Activated CD8-positive, alpha-beta memory T cell treated with anti-CD3 and anti-CD28 coated beads, Interleukin-2, amount 10 ng/mL, durations not matched to agents 7 days and 5 days (primary cell): ENCODE measurements at regions of chr17 and their contacts with region 1.

Region 1: GRCh38 chr17:47315451-47316266 is 8.1 kb upstream of the EFCAB13 start:
- DNase-seq: peak; percentile 56
- ATAC-seq: peak; percentile 68
- H3K4me3 Mint-ChIP-seq: no peak overlapping the region
- H3K27ac Mint-ChIP-seq: no peak overlapping the region
- H3K4me1 Mint-ChIP-seq: no peaks in the 10 kb centered on the region
- H3K27me3 Mint-ChIP-seq: peaks cover 16% of the 10 kb centered on the region

Region 2: DNA sequence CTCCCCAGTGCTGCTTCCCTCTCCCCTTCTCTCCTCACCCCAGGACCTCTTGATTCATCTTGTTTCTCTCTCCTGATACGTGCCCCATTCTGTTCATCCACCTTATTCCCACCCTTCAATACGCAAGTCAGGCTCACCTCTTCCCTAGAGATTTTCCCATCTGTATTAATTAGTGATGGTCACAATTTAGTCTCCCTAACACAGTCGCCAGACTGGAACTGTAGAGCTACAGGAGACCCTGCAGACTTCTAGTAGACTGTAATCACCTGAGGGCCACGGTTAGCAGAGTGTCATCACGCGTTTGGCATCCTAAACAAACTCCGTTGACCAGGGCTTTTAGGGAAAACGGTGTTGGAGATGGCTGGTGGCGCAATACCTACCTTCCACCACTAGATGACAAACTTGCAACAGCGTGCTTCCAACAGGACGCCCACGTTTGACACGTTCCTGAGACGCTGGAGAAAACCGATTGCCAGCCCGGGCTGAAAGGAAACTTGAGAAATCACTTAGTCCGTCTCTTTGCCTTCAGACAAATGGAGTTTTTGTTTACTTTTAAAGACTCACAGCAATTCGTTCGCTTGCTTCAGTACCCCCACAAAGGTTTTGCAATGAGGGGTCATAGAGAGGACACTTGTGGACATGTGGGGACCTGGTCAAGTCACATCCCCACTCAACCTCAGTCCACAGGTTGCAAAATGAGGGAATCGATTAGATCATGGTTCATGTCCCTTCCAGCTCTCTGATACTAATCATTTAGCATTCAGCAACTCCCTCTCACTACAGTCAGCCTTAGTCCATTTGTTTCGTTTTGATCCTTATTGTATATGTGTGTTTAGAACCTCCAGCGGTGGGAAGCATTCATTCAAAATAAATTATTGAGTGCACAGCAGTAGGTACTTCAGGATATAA is 85.9 kb before region 1 on chr17:
- CTCF ChIA-PET with region 1: interaction called, 57 read pairs
- DNase-seq: peak; percentile 84
- ATAC-seq: peak; percentile 95
- H3K4me3 Mint-ChIP-seq: peak overlapping the region; percentile 60
- H3K27ac Mint-ChIP-seq: peak overlapping the region; percentile 24
- H3K4me1 Mint-ChIP-seq: peaks cover 14% of the 10 kb centered on the region
- H3K27me3 Mint-ChIP-seq: peaks cover 13% of the 10 kb centered on the region